B cell (primary cell): ENCODE measurements at regions of chr19 and their contacts with region 1.

Region 1: GRCh38 chr19:38831142-38831605 is 420 bp downstream of the ECH1 start:
- DNase-seq: no peak
- ATAC-seq: peak; percentile 12
- H3K4me3 ChIP-seq: peak overlapping the region; percentile 62 to 100 (median 69)
- H3K4me3 Mint-ChIP-seq: peak overlapping the region; percentile 96
- H3K27ac ChIP-seq: peak overlapping the region; percentile 30 to 83
- H3K27ac Mint-ChIP-seq: peak overlapping the region; percentile 94
- H3K4me1 ChIP-seq: peaks cover 10 to 18% of the 10 kb centered on the region in 2 donors
- H3K4me1 Mint-ChIP-seq: peaks cover 25% of the 10 kb centered on the region
- H3K27me3 ChIP-seq: no peaks in the 10 kb centered on the region
- H3K27me3 Mint-ChIP-seq: no peaks in the 10 kb centered on the region
- CTCF ChIP-seq: no peak

Region 2: DNA sequence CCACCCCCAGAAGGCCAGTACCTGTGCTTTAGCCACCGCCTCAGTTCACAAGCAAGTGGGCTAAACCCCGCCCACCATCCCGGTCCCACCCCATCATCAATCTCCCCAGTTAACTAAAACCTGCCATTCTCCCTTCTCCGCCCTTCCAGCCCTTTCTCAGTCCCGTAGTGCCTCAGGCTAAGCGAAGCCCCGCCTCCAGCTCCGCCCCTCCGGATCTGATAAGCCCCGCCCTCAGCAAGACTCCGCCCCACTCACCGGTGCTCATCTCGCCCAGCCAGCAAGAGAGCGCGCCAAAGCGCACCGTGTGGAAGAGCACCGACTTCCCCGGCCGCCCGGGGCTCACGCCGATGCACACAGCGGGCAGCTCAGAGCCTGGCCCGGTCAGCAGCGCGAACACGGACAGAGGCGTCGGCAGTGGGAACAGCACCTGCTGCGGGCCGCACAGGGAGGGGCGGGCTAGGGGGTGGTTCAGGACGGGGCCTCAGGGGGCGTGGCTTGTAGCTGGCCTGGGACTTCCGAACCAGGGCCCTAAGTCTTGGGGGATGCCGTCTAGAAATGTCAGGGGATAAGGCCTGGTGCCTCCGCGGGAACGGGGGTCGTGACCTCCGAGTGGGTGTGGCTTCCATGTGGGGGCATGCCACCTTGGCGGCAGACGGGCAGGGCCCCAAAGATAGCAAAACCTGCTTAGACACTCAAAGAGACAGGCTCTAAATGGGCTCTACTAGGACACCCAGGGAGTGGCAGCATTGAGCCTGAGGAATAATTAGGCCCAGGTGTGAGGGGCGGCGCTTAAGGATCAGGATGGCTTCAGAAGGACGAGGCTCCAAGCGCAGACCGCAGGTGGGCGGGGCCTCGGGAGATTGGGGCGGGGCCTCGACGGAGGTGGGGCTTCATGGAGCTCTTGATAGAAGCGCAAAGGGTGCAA is 234.9 kb before region 1 on chr19:
- CTCF ChIA-PET with region 1: no interaction called
- POLR2A ChIA-PET with region 1: interaction called, 11 read pairs
- intact Hi-C with region 1: no loop called
- DNase-seq: no peak
- ATAC-seq: peak; percentile 41
- H3K4me3 ChIP-seq: no peak overlapping the region
- H3K4me3 Mint-ChIP-seq: no peak overlapping the region
- H3K27ac ChIP-seq: no peak overlapping the region
- H3K27ac Mint-ChIP-seq: no peak overlapping the region
- H3K4me1 ChIP-seq: no peaks in the 10 kb centered on the region
- H3K4me1 Mint-ChIP-seq: no peaks in the 10 kb centered on the region
- H3K27me3 ChIP-seq: no peaks in the 10 kb centered on the region
- H3K27me3 Mint-ChIP-seq: no peaks in the 10 kb centered on the region
- CTCF ChIP-seq: no peak

Region 3: DNA sequence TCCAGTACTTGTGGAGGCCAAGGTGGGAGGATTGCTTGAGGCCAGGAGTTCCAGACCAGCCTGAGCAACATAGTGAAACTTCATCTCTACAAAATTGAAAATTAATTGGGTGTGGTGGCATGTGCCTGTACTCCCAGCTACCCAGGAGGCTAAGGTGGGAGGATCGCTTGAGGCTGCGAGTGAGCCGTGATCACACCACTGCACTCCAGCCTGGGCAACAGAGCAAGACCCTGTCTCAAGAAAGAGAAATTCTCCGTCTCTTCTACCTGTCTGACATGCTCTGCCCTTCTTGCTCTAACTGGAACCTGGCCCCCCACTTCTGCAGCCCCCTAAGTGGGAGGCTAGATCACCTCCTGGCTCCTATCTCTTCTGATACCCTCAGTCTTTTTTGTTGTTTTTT is 204.8 kb before region 1 on chr19:
- CTCF ChIA-PET with region 1: no interaction called
- POLR2A ChIA-PET with region 1: no interaction called
- intact Hi-C with region 1: no loop called
- DNase-seq: no peak
- ATAC-seq: no peak
- H3K4me3 ChIP-seq: no peak overlapping the region
- H3K4me3 Mint-ChIP-seq: no peak overlapping the region
- H3K27ac ChIP-seq: no peak overlapping the region
- H3K27ac Mint-ChIP-seq: no peak overlapping the region
- H3K4me1 ChIP-seq: no peaks in the 10 kb centered on the region
- H3K4me1 Mint-ChIP-seq: no peaks in the 10 kb centered on the region
- H3K27me3 ChIP-seq: no peaks in the 10 kb centered on the region
- H3K27me3 Mint-ChIP-seq: no peaks in the 10 kb centered on the region
- CTCF ChIP-seq: no peak

Region 4: GRCh38 chr19:38729653-38730469 is 101.3 kb before region 1 on chr19:
- CTCF ChIA-PET with region 1: interaction called, 4 read pairs
- POLR2A ChIA-PET with region 1: interaction called, 3 read pairs
- intact Hi-C with region 1: loop called (anchors 5 kb)
- DNase-seq: peak; percentile 84
- ATAC-seq: peak; percentile 68
- H3K4me3 ChIP-seq: no peak overlapping the region
- H3K4me3 Mint-ChIP-seq: no peak overlapping the region
- H3K27ac ChIP-seq: no peak overlapping the region
- H3K27ac Mint-ChIP-seq: peak overlapping the region; percentile 39
- H3K4me1 ChIP-seq: peaks cover 16 to 23% of the 10 kb centered on the region in 2 donors
- H3K4me1 Mint-ChIP-seq: peaks cover 23% of the 10 kb centered on the region
- H3K27me3 ChIP-seq: no peaks in the 10 kb centered on the region
- H3K27me3 Mint-ChIP-seq: no peaks in the 10 kb centered on the region
- CTCF ChIP-seq: peak; percentile 85

Region 5: GRCh38 chr19:38849860-38850435 is 18.8 kb after region 1 on chr19 and contains the start of gene HNRNPL:
- CTCF ChIA-PET with region 1: interaction called, 7 read pairs
- POLR2A ChIA-PET with region 1: interaction called, 11 read pairs
- intact Hi-C with region 1: loop called (anchors 1 kb)
- DNase-seq: peak; percentile 100
- ATAC-seq: peak; percentile 60
- H3K4me3 ChIP-seq: peak within 1 kb of the TSS; percentile 63 to 95 (median 83)
- H3K4me3 Mint-ChIP-seq: peak within 1 kb of the TSS; percentile 92
- H3K27ac ChIP-seq: peak within 1 kb of the TSS; percentile 82 to 98
- H3K27ac Mint-ChIP-seq: peak within 1 kb of the TSS; percentile 99
- H3K4me1 ChIP-seq: peaks cover 37 to 51% of the 10 kb centered on the region in 2 donors
- H3K4me1 Mint-ChIP-seq: peaks cover 56% of the 10 kb centered on the region
- H3K27me3 ChIP-seq: no peaks in the 10 kb centered on the region
- H3K27me3 Mint-ChIP-seq: no peaks in the 10 kb centered on the region
- CTCF ChIP-seq: peak; percentile 37
- total RNA-seq, gene HNRNPL: 397 and 418 TPM in 2 replicates

Region 6: GRCh38 chr19:38877781-38878574 is 46.8 kb after region 1 on chr19 and contains the start of gene RINL:
- CTCF ChIA-PET with region 1: interaction called, 21 read pairs
- POLR2A ChIA-PET with region 1: no interaction called
- intact Hi-C with region 1: no loop called
- DNase-seq: peak; percentile 85
- ATAC-seq: peak; percentile 93
- H3K4me3 ChIP-seq: peak within 1 kb of the TSS; percentile 36 to 73 (median 46)
- H3K4me3 Mint-ChIP-seq: peak within 1 kb of the TSS; percentile 94
- H3K27ac ChIP-seq: peak within 1 kb of the TSS; percentile 94 to 98
- H3K27ac Mint-ChIP-seq: peak within 1 kb of the TSS; percentile 100
- H3K4me1 ChIP-seq: peaks cover 31 to 37% of the 10 kb centered on the region in 2 donors
- H3K4me1 Mint-ChIP-seq: peaks cover 41% of the 10 kb centered on the region
- H3K27me3 ChIP-seq: no peaks in the 10 kb centered on the region
- H3K27me3 Mint-ChIP-seq: no peaks in the 10 kb centered on the region
- CTCF ChIP-seq: no peak
- total RNA-seq, gene RINL: 66.2 and 67.0 TPM in 2 replicates

Region 7: GRCh38 chr19:38899447-38900219 is 68.5 kb after region 1 on chr19 and contains the starts of genes NFKBIB and SIRT2:
- CTCF ChIA-PET with region 1: interaction called, 3 read pairs
- POLR2A ChIA-PET with region 1: no interaction called
- intact Hi-C with region 1: loop called (anchors 1 kb)
- DNase-seq: peak; percentile 100
- ATAC-seq: peak; percentile 89
- H3K4me3 ChIP-seq: peak within 1 kb of the TSS; percentile 85 to 95 (median 92)
- H3K4me3 Mint-ChIP-seq: peak within 1 kb of the TSS; percentile 96
- H3K27ac ChIP-seq: peak within 1 kb of the TSS; percentile 89 to 99
- H3K27ac Mint-ChIP-seq: peak within 1 kb of the TSS; percentile 94
- H3K4me1 ChIP-seq: peaks cover 20 to 30% of the 10 kb centered on the region in 2 donors
- H3K4me1 Mint-ChIP-seq: peaks cover 38% of the 10 kb centered on the region
- H3K27me3 ChIP-seq: no peaks in the 10 kb centered on the region
- H3K27me3 Mint-ChIP-seq: no peaks in the 10 kb centered on the region
- CTCF ChIP-seq: no peak
- total RNA-seq, gene NFKBIB: 30.3 and 31.5 TPM in 2 replicates
- total RNA-seq, gene SIRT2: 41.8 and 42.4 TPM in 2 replicates